ENCODE measurements at regions of chr10 and their contacts with region 1.

Region 1: GRCh38 chr10:58177362-58177947 is 90.2 kb downstream of the IPMK start:
- DNase-seq: no peak
- ATAC-seq: no peak

Region 2: GRCh38 chr10:58275908-58276307 is 98.5 kb after region 1 on chr10:
- intact Hi-C with region 1: no loop called
- DNase-seq: no peak
- ATAC-seq: peak; percentile 55

Region 3: DNA sequence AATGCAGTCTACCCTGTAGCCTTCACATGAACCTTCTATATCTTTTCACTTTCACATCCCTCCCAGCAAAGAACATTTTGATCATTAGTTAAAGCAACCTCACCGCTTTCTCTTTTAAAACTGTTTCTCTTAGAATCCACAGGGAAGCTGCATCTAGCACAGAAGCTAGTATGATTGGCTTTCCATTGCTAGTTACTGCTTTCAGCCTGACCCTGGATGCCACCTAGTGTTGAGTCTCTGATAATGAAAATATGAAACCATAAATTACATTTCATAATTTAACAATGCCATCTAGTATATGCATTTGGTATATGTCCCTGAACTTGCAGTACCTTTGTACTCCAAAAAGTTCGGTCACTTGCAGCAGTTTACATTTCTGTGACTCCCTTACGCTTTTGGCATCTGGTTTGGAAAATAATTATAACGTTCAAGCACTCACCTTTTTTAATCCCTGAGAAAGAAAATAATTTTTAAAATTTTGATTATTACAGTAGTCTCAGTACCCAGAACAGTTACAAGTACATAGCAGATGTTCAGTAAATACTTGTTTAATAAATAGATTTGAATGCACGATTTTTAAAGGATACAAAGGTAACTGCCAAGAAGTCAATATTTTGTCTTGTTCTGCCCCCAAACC is 114.2 kb after region 1 on chr10:
- intact Hi-C with region 1: loop called in 1 of 2 experiments (anchors 5 kb)
- DNase-seq: no peak
- ATAC-seq: peak; percentile 92

Region 4: DNA sequence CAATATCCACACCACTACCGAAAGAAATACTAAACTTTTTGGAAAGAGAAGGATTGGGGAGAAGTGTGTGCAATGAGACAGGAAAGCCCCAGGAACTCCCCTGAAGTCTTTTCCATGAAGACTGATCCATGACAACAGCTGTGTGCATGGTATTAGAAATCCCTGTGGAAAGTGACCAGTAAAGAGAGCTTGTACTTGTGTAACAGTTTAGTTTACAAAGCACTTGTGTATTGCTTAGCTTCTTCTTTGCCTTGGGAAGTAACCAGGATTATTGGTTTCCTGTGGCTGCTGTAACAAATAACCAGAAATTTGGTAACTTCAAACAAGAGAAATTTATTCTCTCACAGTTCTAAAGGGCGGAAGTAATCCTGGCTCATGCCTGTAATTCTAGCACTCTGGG is 226.5 kb after region 1 on chr10:
- intact Hi-C with region 1: no loop called
- DNase-seq: no peak
- ATAC-seq: no peak

Region 5: GRCh38 chr10:58666024-58666423 is 488.6 kb after region 1 on chr10:
- intact Hi-C with region 1: no loop called
- DNase-seq: no peak
- ATAC-seq: peak; percentile 78

Measured in left colon (tissue), 2 donors.